ENCODE measurements at regions of chr1 and their contacts with region 1.

Region 1: DNA sequence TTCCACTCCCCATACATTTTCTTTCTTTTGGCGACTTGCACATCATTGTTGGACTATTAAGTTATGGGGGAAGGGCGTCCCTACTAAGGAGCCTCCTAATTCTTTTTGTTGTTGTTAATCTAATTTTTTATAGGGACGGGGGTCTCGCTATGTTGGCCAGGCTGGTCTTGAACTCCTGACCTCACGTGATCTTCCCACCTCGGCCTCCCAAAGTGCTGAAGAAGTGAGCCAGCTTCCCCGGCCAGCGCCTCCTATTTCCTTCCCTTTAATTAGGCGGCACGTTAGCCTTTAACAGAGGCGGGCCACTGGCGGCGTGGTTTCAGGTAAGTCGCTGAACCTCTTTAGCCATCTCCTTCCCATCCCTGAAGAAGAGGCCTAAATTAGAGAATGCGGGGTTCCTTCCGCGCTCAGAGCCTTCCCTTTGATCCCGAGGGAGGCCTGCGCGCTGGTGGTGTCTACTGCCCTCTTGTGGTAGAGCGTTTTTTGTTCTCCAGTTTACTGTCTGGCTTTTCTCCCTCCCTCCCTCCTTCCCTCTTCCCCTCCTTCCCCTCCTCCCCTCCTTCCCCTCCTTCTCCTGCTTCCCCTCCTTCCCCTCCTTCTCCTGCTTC is 38.1 kb downstream of the TNFRSF9 start:
- DNase-seq: peak; percentile 69
- H3K4me3 Mint-ChIP-seq: no peak overlapping the region
- H3K27ac Mint-ChIP-seq: no peak overlapping the region
- H3K4me1 Mint-ChIP-seq: no peaks in the 10 kb centered on the region
- H3K27me3 Mint-ChIP-seq: peaks cover 12% of the 10 kb centered on the region
- CTCF ChIP-seq: peak; percentile 52

Region 2: GRCh38 chr1:7808253-7808844 is 94.2 kb before region 1 on chr1:
- CTCF ChIA-PET with region 1: interaction called, 7 read pairs
- intact Hi-C with region 1: loop called (anchors 1 kb)
- DNase-seq: no peak
- H3K4me3 Mint-ChIP-seq: no peak overlapping the region
- H3K27ac Mint-ChIP-seq: no peak overlapping the region
- H3K4me1 Mint-ChIP-seq: no peaks in the 10 kb centered on the region
- H3K27me3 Mint-ChIP-seq: no peaks in the 10 kb centered on the region
- CTCF ChIP-seq: peak; percentile 45

Measured in Calu3 (cell line).